ENCODE measurements at regions of chr17 and their contacts with region 1.

Region 1: GRCh38 chr17:75827252-75828115 is 16.7 kb downstream of the UNC13D start:
- DNase-seq: peak; percentile 91
- ATAC-seq: peak; percentile 74
- H3K4me3 Mint-ChIP-seq: peak overlapping the region; percentile 47
- H3K27ac Mint-ChIP-seq: peak overlapping the region; percentile 63; the same call in 1 of the 2 replicates
- H3K4me1 Mint-ChIP-seq: peaks cover 27% of the 10 kb centered on the region
- H3K27me3 Mint-ChIP-seq: no peaks in the 10 kb centered on the region
- CTCF ChIP-seq: peak; percentile 71

Region 2: GRCh38 chr17:75652915-75653549 is 174.5 kb before region 1 on chr17:
- CTCF ChIA-PET with region 1: no interaction called
- POLR2A ChIA-PET with region 1: no interaction called
- DNase-seq: peak; percentile 76
- ATAC-seq: peak; percentile 99
- H3K4me3 Mint-ChIP-seq: no peak overlapping the region
- H3K27ac Mint-ChIP-seq: peak overlapping the region; percentile 71; the same call in 1 of the 2 replicates
- H3K4me1 Mint-ChIP-seq: no peaks in the 10 kb centered on the region
- H3K27me3 Mint-ChIP-seq: no peaks in the 10 kb centered on the region
- CTCF ChIP-seq: peak; percentile 66; the same call in 1 of the 2 replicates

Region 3: GRCh38 chr17:75737133-75737962 is 90.1 kb before region 1 on chr17:
- CTCF ChIA-PET with region 1: no interaction called
- POLR2A ChIA-PET with region 1: no interaction called
- DNase-seq: no peak
- ATAC-seq: no peak
- H3K4me3 Mint-ChIP-seq: no peak overlapping the region
- H3K27ac Mint-ChIP-seq: no peak overlapping the region
- H3K4me1 Mint-ChIP-seq: no peaks in the 10 kb centered on the region
- H3K27me3 Mint-ChIP-seq: no peaks in the 10 kb centered on the region
- CTCF ChIP-seq: no peak

Region 4: DNA sequence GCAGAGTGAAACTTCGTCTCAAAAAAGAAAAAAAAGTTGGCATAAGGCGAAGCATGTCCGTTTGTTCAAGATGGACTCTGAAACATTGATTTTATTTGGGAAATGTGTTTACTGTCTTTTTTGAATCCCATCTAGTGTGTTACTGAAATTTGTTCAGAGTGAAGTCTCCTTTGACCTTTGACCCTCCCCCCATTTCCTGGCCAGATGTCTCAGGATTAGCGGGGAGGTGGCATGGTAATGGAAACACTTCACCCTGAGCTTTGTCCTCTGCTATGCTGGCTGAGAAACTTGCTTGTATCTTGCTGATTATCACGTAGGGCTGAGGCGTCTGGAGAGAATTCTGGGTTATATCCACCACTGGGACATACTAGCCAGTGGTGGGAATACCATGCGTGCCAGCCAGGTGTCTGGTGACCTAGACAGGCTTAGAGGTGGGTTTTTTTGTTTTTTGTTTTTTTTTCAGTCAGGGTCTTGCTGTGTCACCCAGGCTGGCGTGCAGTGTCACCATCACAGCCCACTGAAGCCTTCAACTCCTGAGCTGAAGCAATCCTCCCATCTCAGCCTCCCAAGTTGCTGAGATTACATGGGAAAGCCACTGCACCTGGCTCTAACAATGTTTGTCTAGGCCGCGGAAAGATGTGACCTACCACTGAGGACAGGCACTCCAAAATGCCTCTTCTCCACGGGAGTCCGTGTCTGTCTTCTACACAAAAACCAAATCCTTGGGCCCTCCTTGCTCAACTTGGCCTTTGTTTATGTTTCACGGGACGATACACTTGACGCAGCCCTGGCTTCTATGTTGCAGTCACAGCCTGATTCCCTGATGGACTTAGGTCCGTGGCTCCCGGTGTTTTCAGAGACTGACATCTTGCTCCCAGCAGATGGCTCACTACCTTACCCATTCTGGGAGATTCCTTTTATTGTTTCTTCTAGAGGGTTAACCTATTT is 55.9 kb before region 1 on chr17:
- CTCF ChIA-PET with region 1: interaction called, 27 read pairs
- POLR2A ChIA-PET with region 1: interaction called, 3 read pairs
- DNase-seq: no peak
- ATAC-seq: no peak
- H3K4me3 Mint-ChIP-seq: no peak overlapping the region
- H3K27ac Mint-ChIP-seq: peak overlapping the region; percentile 54
- H3K4me1 Mint-ChIP-seq: peaks cover 20% of the 10 kb centered on the region
- H3K27me3 Mint-ChIP-seq: no peaks in the 10 kb centered on the region
- CTCF ChIP-seq: no peak

Region 5: GRCh38 chr17:75799398-75799797 is 28.1 kb before region 1 on chr17:
- CTCF ChIA-PET with region 1: interaction called, 22 read pairs
- POLR2A ChIA-PET with region 1: interaction called, 3 read pairs
- DNase-seq: no peak
- ATAC-seq: no peak
- H3K4me3 Mint-ChIP-seq: no peak overlapping the region
- H3K27ac Mint-ChIP-seq: peak overlapping the region; percentile 85; the same call in 1 of the 2 replicates
- H3K4me1 Mint-ChIP-seq: no peaks in the 10 kb centered on the region
- H3K27me3 Mint-ChIP-seq: no peaks in the 10 kb centered on the region
- CTCF ChIP-seq: no peak

Region 6: DNA sequence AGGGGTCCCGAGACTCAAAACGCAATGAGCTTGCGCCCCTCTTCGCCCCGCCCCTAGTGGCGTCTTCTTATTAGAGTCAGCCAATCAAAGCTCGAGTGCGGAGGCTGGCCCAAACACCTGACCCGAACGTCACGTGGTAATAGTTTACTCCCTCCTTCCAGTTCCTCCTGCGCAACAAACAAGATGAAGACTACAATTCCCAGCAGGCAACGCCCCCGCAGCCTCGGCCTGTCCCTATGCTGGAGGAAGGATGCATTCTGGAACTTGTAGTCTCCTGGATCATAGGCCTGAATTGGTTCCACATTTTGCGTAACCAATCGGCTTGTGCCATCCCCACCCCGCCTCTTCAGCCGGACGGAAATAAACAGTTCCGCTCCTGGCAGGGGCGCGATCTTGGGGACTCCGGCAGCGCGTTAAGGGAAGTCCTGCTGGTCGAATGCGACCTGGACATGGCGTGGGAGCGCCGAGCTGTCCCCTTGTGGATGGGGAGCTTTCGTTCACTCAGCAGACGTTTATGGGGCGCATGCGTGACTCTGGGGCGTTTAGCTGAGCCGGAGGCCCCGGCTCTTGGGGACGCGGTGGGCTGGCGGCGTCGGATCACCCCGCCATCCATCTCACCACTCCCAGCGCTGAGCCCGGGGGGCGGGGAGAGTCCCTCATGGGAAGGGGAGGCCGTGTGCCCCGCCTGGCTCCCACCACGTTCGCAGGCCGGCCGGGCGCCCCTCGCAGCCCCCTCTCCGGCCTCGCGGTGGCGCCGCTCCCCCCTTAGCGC is 28.0 kb after region 1 on chr17 and contains the start of gene WBP2:
- CTCF ChIA-PET with region 1: interaction called, 180 read pairs
- POLR2A ChIA-PET with region 1: interaction called, 9 read pairs
- DNase-seq: peak; percentile 98
- ATAC-seq: peak; percentile 92
- H3K4me3 Mint-ChIP-seq: no peak within 1 kb of the TSS
- H3K27ac Mint-ChIP-seq: peak within 1 kb of the TSS; percentile 98
- H3K4me1 Mint-ChIP-seq: peaks cover 12% of the 10 kb centered on the region
- H3K27me3 Mint-ChIP-seq: no peaks in the 10 kb centered on the region
- CTCF ChIP-seq: no peak
- total RNA-seq, gene WBP2: 64.3 to 69.4 TPM (median 68.8 TPM) in 3 replicates

Region 7: GRCh38 chr17:75877752-75878173 is 50.3 kb after region 1 on chr17:
- CTCF ChIA-PET with region 1: interaction called, 22 read pairs
- POLR2A ChIA-PET with region 1: no interaction called
- DNase-seq: peak; percentile 81
- ATAC-seq: peak; percentile 81
- H3K4me3 Mint-ChIP-seq: peak overlapping the region; percentile 77
- H3K27ac Mint-ChIP-seq: no peak overlapping the region
- H3K4me1 Mint-ChIP-seq: peaks cover 17% of the 10 kb centered on the region
- H3K27me3 Mint-ChIP-seq: peaks cover 39% of the 10 kb centered on the region
- CTCF ChIP-seq: no peak